ENCODE measurements at regions of chr9 and their contacts with region 1.

Region 1: DNA sequence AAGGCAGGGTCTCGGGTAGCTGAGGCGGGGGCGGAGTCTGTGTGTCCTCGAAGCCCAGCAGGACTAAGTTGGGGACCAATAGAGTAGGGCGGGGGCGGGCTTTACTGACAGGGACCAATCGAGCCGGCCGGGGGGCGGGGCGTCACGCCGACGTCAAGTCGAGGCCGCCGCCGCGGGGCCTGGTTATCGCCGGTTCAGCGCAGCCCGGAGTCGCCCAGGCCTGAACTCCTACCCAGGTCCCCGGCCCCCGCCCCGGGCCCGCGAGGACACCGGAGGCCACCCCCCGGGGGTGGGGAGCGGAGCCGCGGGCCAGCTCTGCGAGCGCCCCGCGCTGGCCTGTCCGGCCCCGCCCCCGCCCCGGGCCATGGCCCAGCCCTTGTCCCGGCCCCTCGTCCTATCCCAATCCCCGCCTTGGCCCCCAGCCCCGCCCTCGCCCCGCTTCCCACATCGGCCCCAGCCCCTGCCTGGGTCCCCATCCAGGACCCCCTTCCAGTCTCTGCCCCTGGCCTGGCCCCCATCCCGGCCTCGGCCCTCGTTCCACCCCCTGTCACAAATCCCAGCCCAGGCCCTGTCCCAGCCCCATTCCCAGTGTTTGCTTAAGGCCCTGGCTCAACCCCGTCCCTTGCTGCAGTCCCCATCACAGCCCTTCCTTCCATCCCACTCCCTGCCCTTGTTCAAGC is at the start of gene TMEM8B:
- DNase-seq: peak; percentile 80
- H3K4me3 ChIP-seq: peak within 1 kb of the TSS; percentile 62 to 84 (median 63)
- H3K27ac ChIP-seq: peak within 1 kb of the TSS; percentile 45
- H3K4me1 ChIP-seq: peaks cover 21% of the 10 kb centered on the region
- H3K27me3 ChIP-seq: no peaks in the 10 kb centered on the region
- CTCF ChIP-seq: no peak
- total RNA-seq, gene TMEM8B: 3.8 to 7.5 TPM

Region 2: DNA sequence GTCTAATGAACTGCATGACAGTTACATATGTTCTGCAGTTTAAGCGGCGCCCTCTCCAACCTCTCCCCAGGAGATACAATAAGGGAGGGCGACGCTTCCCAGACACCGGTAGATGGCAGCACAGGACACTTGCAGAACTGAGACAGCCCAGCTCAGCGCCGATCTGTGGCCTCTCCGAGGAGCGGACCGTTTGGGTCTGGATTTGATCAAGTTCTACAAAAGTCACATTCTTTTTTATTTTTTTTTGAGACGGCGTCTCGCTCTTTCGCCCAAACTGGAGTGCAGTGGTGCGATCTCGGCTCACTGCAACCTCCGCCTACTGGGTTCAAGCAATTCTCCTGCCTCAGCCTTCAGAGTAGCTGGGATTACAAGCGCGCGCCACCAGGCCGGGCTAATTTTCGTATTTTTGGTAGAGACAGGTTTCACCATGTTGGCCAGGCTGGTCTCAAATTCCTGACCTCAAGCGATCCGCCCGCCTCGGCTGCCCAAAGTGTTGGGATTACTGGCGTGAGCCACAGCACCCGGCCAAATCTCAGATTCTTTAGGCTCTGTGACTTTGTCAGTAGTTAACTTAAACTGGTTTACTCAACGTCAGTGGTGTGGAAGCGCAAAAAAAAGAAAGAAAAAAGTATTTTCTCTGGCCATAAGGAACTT is 712.2 kb before region 1 on chr9:
- CTCF ChIA-PET with region 1: no interaction called
- dilution Hi-C with region 1: no loop called
- in situ Hi-C with region 1: no loop called
- intact Hi-C with region 1: loop called (anchors 10 kb)
- DNase-seq: peak; percentile 84
- H3K4me3 ChIP-seq: peak overlapping the region; percentile 44 to 84 (median 60)
- H3K27ac ChIP-seq: no peak overlapping the region
- H3K4me1 ChIP-seq: peaks cover 23% of the 10 kb centered on the region
- H3K27me3 ChIP-seq: no peaks in the 10 kb centered on the region
- CTCF ChIP-seq: peak; percentile 95 to 99

Region 3: GRCh38 chr9:35741740-35742139 is 87.5 kb before region 1 on chr9:
- CTCF ChIA-PET with region 1: no interaction called
- dilution Hi-C with region 1: loop called (anchors 5 kb)
- in situ Hi-C with region 1: no loop called
- intact Hi-C with region 1: no loop called
- DNase-seq: no peak
- H3K4me3 ChIP-seq: no peak overlapping the region
- H3K27ac ChIP-seq: no peak overlapping the region
- H3K4me1 ChIP-seq: peaks cover 9% of the 10 kb centered on the region
- H3K27me3 ChIP-seq: no peaks in the 10 kb centered on the region
- CTCF ChIP-seq: no peak

Region 4: GRCh38 chr9:35790385-35791296 is 38.6 kb before region 1 on chr9:
- CTCF ChIA-PET with region 1: interaction called, 3 read pairs
- dilution Hi-C with region 1: no loop called
- in situ Hi-C with region 1: no loop called
- intact Hi-C with region 1: loop called (anchors 1 kb)
- DNase-seq: peak; percentile 60
- H3K4me3 ChIP-seq: no peak overlapping the region
- H3K27ac ChIP-seq: no peak overlapping the region
- H3K4me1 ChIP-seq: peaks cover 11% of the 10 kb centered on the region
- H3K27me3 ChIP-seq: no peaks in the 10 kb centered on the region
- CTCF ChIP-seq: peak; percentile 83

Region 5: GRCh38 chr9:35854091-35854762 is 25.0 kb after region 1 on chr9:
- CTCF ChIA-PET with region 1: no interaction called
- dilution Hi-C with region 1: no loop called
- in situ Hi-C with region 1: no loop called
- intact Hi-C with region 1: no loop called
- DNase-seq: no peak
- H3K4me3 ChIP-seq: no peak overlapping the region
- H3K27ac ChIP-seq: no peak overlapping the region
- H3K4me1 ChIP-seq: no peaks in the 10 kb centered on the region
- H3K27me3 ChIP-seq: no peaks in the 10 kb centered on the region
- CTCF ChIP-seq: no peak

Region 6: GRCh38 chr9:35871497-35871896 is 42.3 kb after region 1 on chr9:
- CTCF ChIA-PET with region 1: no interaction called
- dilution Hi-C with region 1: no loop called
- in situ Hi-C with region 1: no loop called
- intact Hi-C with region 1: no loop called
- DNase-seq: peak; percentile 73
- H3K4me3 ChIP-seq: no peak overlapping the region
- H3K27ac ChIP-seq: no peak overlapping the region
- H3K4me1 ChIP-seq: peaks cover 22% of the 10 kb centered on the region
- H3K27me3 ChIP-seq: no peaks in the 10 kb centered on the region
- CTCF ChIP-seq: no peak

Region 7: DNA sequence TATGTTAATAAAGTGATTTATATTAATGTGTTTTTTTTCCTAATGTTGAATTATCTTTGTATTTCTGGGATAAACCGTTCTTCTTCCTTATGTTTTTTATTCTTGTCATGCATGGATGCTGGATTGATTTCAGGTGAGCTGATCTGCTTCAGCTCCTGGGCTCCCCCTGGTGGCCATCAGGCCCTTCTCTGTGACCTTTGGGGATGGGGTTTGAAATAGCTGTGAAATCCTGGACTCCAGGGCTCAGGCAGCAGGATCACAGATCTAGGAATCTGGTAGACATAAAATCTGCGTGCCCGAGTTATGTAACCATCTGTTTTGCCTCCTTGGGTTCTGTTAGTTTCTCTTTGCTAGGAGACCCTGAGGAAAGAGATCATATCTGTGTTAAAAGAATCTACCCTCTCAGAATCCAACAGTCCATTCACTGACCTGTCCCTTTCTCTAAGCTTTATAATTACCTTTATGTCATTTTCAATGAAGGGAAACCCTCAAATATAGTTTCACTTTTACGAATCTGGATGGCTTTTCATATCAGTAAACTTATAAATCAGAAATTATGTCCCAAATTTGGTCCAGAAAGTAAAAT is 53.1 kb after region 1 on chr9:
- CTCF ChIA-PET with region 1: interaction called, 9 read pairs
- dilution Hi-C with region 1: no loop called
- in situ Hi-C with region 1: loop called in 1 of 2 experiments (anchors 5 kb)
- intact Hi-C with region 1: loop called (anchors 1 kb)
- DNase-seq: peak; percentile 46
- H3K4me3 ChIP-seq: no peak overlapping the region
- H3K27ac ChIP-seq: no peak overlapping the region
- H3K4me1 ChIP-seq: no peaks in the 10 kb centered on the region
- H3K27me3 ChIP-seq: no peaks in the 10 kb centered on the region
- CTCF ChIP-seq: peak; percentile 99

Region 8: DNA sequence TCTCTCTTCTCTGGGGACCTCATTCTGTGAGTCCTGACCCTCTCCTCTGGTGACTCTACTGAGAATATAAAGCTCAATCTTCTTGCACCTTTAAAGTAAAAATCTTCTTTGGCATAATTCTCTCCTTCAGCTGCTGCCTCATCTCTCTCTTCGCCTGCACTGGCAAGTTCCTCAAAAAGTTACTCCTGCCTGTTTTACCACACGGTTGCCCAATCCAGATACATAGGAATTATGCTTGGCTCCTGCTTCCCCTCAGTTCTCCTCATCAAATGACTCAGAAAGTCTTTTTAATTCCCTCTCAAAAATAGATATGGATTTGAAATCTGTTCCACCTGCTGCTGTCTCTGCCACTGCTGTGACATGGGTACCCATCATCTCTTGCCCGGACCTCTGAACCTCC is 62.4 kb after region 1 on chr9:
- CTCF ChIA-PET with region 1: interaction called, 4 read pairs
- dilution Hi-C with region 1: loop called (anchors 5 kb)
- in situ Hi-C with region 1: no loop called
- intact Hi-C with region 1: no loop called
- DNase-seq: no peak
- H3K4me3 ChIP-seq: no peak overlapping the region
- H3K27ac ChIP-seq: no peak overlapping the region
- H3K4me1 ChIP-seq: no peaks in the 10 kb centered on the region
- H3K27me3 ChIP-seq: no peaks in the 10 kb centered on the region
- CTCF ChIP-seq: no peak

Region 9: DNA sequence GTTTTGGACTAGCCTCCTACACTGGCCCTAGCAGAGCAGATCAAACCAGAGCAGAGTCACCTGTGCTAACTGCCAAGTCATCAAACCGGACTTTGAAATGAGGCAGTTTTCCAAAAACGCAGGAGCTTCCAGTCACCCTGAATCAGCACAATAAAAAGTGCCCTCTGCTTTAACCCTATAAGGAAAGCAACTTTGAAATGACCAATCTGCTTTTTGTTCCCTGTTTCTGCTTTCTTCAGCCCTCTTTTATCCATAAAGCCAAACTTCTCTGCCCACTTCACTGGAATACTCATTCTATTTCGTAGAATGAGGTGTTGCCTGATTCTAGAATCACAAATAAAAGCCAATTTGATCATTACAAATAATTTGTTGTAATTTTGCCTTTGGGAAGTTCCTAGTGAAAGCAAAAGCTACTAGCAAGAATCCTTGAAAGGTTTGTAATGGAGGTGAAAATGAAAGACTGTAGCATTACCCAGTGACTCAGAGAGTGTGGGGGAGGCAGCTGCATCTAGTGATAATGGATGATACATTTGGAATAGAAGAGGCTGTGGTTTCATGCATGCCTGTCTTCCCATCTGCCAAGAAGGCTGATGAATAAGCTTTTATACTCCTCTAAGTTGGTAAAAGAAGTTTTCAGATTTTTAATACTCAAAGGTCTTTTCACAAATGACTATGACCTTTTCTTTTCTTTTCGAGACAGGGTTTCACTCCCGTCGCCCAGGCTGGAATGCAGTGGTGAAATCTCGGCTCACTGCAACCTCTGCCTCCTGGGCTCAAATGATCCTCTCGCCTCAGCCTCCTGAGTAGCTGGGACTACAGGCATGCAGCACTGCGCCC is 94.9 kb after region 1 on chr9:
- CTCF ChIA-PET with region 1: no interaction called
- dilution Hi-C with region 1: loop called (anchors 5 kb)
- in situ Hi-C with region 1: no loop called
- intact Hi-C with region 1: no loop called
- DNase-seq: peak; percentile 91
- H3K4me3 ChIP-seq: peak overlapping the region in 2 of 3 experiments; percentile 25 to 36
- H3K27ac ChIP-seq: peak overlapping the region; percentile 90
- H3K4me1 ChIP-seq: peaks cover 28% of the 10 kb centered on the region
- H3K27me3 ChIP-seq: no peaks in the 10 kb centered on the region
- CTCF ChIP-seq: no peak